Activated B cell treated with CpG ODN at 0.5 μM for 24 hours (primary cell): ENCODE measurements at regions of chr3 and their contacts with region 1.

Region 1: DNA sequence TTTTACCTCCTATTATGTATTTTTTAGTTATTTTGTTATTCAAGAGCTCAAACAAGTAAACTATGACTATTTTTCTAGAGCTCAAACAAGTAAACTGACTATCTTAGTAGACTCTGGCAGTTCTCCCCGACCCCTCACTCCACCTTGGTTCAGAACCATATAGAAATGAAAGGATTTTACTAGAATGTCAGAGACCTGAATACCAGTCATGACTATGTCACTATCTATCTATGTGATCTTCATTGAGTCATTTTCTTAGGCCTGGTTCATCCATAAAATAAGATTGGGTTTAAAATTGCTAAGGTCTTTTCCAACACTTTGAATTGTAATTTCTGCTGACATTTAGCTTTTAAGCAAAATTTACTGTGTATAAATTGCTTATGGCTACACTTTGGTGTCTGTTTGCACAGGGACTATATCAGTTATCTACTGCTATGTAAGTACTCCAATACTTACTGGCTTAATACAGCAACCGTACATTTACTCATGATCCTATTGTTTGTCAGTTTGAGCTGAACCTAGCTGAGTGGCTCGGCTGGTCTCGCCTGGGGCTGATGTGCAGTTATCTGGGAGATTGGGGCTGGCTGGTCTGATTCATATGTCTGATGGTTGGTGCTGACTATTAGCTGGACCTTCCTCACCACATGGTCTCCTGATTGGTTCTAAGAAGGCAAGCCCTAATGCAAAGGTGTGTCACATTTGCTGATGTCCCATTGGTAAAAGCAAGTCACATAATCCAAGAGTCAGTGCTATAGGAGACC is 37.0 kb downstream of the RASA2 start:
- DNase-seq: no peak
- ATAC-seq: no peak
- H3K4me3 Mint-ChIP-seq: no peak overlapping the region
- H3K27ac Mint-ChIP-seq: peak overlapping the region; percentile 71
- H3K4me1 Mint-ChIP-seq: peaks cover 69% of the 10 kb centered on the region
- H3K27me3 Mint-ChIP-seq: no peaks in the 10 kb centered on the region
- CTCF ChIP-seq: no peak

Region 2: GRCh38 chr3:141507392-141508066 is 16.3 kb before region 1 on chr3:
- CTCF ChIA-PET with region 1: no interaction called
- POLR2A ChIA-PET with region 1: no interaction called
- intact Hi-C with region 1: loop called (anchors 2 kb)
- DNase-seq: no peak
- ATAC-seq: no peak
- H3K4me3 Mint-ChIP-seq: no peak overlapping the region
- H3K27ac Mint-ChIP-seq: no peak overlapping the region
- H3K4me1 Mint-ChIP-seq: peaks cover 38% of the 10 kb centered on the region
- H3K27me3 Mint-ChIP-seq: no peaks in the 10 kb centered on the region
- CTCF ChIP-seq: no peak

Region 3: GRCh38 chr3:141539431-141540187 is 15.8 kb after region 1 on chr3:
- CTCF ChIA-PET with region 1: no interaction called
- POLR2A ChIA-PET with region 1: no interaction called
- intact Hi-C with region 1: loop called (anchors 2 kb)
- DNase-seq: no peak
- ATAC-seq: no peak
- H3K4me3 Mint-ChIP-seq: no peak overlapping the region
- H3K27ac Mint-ChIP-seq: no peak overlapping the region
- H3K4me1 Mint-ChIP-seq: peaks cover 6% of the 10 kb centered on the region
- H3K27me3 Mint-ChIP-seq: no peaks in the 10 kb centered on the region
- CTCF ChIP-seq: no peak